Left cardiac atrium (tissue), 4 donors: ENCODE measurements at regions of chr19 and their contacts with region 1.

Region 1: GRCh38 chr19:11673608-11674041 is 65.1 kb downstream of the ZNF823 start:
- DNase-seq: peak; percentile 83
- ATAC-seq: peak; percentile 94 to 96

Region 2: DNA sequence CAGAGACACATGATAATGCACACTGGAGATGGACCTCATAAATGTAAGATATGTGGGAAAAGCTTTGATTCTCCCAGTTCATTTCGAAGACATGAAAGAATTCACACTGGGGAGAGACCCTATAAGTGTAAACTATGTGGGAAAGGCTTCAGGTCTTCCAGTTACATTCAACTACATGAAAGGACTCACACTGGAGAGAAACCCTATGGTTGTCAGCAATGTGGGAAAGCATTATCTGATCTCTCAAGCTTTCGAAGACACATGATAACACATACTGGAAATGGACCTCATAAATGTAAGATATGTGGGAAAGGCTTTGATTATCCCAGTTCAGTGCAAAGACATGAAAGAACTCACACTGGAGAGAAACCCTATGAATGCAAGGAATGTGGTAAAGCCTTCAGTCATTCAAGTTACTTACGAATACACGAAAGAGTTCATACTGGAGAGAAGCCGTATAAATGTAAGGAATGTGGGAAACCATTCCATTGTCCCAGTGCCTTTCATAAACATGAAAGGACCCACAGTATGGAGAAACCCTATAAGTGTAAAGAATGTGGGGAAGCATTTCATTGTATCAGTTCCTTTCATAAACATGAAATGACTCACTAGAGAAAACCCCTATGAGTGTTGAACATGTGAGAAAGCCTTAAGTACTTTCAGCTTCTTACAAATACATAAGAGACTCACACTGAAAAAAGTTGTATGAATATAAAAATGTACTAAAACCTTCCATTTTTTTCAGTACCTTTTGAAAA is 107.8 kb after region 1 on chr19:
- intact Hi-C with region 1: loop called (anchors 5 to 10 kb)
- DNase-seq: no peak
- ATAC-seq: no peak